ENCODE measurements at regions of chr17 and their contacts with region 1.

Region 1: DNA sequence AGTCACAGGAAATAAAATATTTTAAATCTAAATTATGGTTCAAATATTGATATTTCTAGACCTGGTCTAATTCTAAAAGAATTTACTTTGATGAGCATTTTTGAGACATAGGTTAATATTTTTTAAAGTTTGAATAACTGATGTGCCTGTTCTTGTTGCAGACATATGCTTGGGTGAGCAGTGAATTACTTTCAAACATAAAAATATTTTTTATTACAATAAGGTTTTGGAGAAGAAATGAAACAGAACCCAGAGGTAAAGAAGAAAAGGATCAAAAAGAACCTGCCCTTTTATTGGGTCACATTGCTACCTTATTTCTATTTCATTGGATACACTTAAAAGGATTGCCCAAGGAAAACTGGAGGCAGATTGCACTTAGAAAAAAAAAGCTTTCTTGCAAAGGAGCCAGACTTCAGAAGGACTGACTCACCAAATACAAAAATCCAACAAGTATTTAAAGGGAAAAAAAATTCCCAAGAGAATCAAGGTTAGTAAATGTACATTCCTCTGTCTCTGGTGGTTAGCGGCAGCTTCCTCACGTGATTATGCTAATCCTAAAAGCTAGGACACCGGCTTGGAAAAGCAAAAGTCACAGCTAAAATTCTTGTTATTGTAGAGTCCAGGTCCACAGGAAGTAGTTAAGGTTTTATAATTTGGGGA is 18.5 kb downstream of the ENPP7 start:
- DNase-seq: no peak

Region 2: GRCh38 chr17:79721993-79722671 is 27.2 kb before region 1 on chr17:
- CTCF ChIA-PET with region 1: no interaction called
- POLR2A ChIA-PET with region 1: no interaction called
- DNase-seq: peak; percentile 70

Region 3: DNA sequence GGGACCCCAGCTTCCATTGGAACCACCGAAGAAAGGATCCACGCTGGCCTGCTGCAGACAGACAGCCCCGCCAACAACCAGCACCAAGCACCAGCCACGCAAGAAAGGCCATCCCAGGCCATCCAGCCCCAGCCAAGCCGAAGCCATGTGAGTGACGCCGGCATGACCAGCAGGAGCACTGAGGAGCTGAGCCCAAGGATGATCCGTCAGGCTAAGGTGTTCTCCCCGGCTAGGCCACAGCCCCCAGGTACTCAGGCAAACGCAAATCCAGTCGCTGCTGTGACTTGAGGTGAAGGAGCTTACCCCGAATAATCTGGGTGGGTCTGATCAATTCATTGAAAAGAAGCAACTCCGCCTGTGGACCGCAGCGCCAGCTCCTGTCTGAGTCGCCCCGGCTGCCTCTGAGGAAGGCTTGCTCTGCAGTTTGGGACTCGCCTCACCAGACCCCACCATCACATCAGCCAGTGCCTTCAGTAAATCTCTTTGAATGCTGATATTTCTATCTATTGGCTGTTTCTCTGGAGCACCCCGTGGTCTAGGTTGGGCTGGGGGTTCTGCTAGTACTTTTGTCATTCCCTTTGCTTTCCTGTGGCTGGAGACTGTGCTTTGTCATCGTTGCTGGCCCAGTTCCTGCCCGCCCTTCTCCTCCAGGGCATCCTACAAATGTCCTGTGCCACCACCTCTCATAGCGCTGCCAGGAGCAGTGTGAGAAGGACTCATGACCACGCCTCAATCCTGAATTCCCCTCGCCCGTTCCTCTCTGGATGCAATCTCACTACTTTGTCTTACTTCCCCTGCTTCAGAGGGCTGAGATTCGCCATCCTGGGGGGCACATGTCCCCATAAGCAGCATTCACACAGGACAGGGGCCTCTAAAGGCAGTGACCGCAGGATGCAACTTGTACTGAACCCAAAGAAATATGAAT is 20.6 kb after region 1 on chr17:
- CTCF ChIA-PET with region 1: interaction called, 12 read pairs
- POLR2A ChIA-PET with region 1: interaction called, 3 read pairs
- DNase-seq: no peak

Region 4: GRCh38 chr17:79777894-79778503 is 28.7 kb after region 1 on chr17 and contains the start of gene CBX2:
- CTCF ChIA-PET with region 1: interaction called, 5 read pairs
- POLR2A ChIA-PET with region 1: interaction called, 10 read pairs
- DNase-seq: peak; percentile 97